ENCODE measurements at regions of chr5 and their contacts with region 1.

Region 1: GRCh38 chr5:39148983-39149534 is 70.3 kb downstream of the FYB1 start:
- DNase-seq: no peak
- H3K4me3 Mint-ChIP-seq: no peak overlapping the region
- H3K27ac Mint-ChIP-seq: peak overlapping the region; percentile 76
- H3K4me1 Mint-ChIP-seq: peaks cover 52% of the 10 kb centered on the region
- H3K27me3 Mint-ChIP-seq: no peaks in the 10 kb centered on the region

Region 2: GRCh38 chr5:39132128-39132447 is 17.0 kb before region 1 on chr5:
- intact Hi-C with region 1: no loop called
- DNase-seq: no peak
- H3K4me3 Mint-ChIP-seq: no peak overlapping the region
- H3K27ac Mint-ChIP-seq: no peak overlapping the region
- H3K4me1 Mint-ChIP-seq: peaks cover 6% of the 10 kb centered on the region
- H3K27me3 Mint-ChIP-seq: no peaks in the 10 kb centered on the region

Region 3: DNA sequence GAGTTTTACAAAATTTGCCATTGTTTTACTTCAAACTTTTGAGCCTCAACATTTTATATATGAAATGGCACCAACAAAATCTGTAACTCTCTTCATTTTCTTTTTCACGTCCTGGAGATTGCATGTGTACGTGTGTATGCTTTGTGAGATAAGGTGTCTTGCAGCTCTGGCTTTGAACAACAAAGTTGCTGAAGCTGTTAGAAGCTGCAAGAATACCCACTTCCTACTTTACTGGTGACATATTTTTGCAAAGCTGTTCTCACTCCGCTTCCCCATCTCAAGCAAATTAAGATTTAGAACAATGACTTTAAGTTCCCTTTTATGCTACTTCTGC is 28.5 kb after region 1 on chr5:
- intact Hi-C with region 1: loop called (anchors 1 kb)
- DNase-seq: no peak
- H3K4me3 Mint-ChIP-seq: peak overlapping the region; percentile 78
- H3K27ac Mint-ChIP-seq: peak overlapping the region; percentile 77
- H3K4me1 Mint-ChIP-seq: peaks cover 89% of the 10 kb centered on the region
- H3K27me3 Mint-ChIP-seq: no peaks in the 10 kb centered on the region

Region 4: DNA sequence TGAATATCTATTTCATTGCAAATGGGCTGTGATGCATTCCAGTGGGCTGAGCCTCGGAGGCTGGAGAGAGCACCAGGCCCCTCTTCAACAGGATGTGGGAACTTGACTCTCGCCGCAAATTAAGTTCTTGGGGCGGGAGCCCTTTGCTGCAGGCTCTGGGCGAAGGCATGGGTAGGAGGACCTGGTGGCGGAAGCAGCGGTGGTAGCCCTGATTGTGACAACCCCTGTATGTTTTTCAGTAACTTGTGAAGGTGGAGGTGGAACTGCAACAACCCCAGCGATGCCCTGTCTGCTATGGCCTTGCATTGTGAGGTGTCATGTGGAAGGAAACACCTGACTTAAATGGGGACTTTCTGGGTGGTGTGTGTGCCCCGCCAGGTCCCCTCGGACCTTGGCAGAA is 60.9 kb after region 1 on chr5:
- intact Hi-C with region 1: loop called (anchors 1 kb)
- DNase-seq: peak; percentile 78
- H3K4me3 Mint-ChIP-seq: peak overlapping the region; percentile 67
- H3K27ac Mint-ChIP-seq: peak overlapping the region; percentile 92
- H3K4me1 Mint-ChIP-seq: peaks cover 94% of the 10 kb centered on the region
- H3K27me3 Mint-ChIP-seq: no peaks in the 10 kb centered on the region

Region 5: DNA sequence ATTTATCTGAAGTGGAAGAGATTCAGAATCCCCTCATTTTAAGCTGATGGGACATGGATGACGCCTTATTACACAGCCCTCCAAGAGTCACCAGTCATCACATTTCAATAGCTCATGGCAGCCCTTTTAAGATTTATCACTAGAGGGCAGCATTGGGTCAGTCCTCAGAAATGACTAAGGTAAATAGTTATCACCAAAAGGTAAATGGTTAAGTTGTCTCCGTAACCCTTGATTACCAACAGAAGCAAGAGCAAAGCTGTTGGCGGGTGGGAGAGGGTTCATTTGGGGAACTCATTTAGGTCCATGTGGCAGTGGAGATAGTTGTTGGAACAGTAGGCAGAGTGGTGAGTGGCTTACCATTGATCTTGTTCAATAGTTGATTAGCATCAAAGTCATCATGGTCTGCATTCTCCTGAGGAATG is 227.2 kb after region 1 on chr5:
- intact Hi-C with region 1: loop called (anchors 10 kb)
- DNase-seq: peak; percentile 17
- H3K4me3 Mint-ChIP-seq: no peak overlapping the region
- H3K27ac Mint-ChIP-seq: no peak overlapping the region
- H3K4me1 Mint-ChIP-seq: no peaks in the 10 kb centered on the region
- H3K27me3 Mint-ChIP-seq: peaks cover 9% of the 10 kb centered on the region

Measured in activated T-helper 1 cell treated with anti-CD3 and anti-CD28 coated beads, Interleukin-12 subunit alpha, Interleukin-12 subunit beta, Interleukin-2, Interleukin-4 antibody, amounts not matched to agents 30 ng/mL and 10 ng/mL and 1 ng/mL, durations not matched to agents 14 hours and 24 hours and 36 hours (primary cell).